ENCODE measurements at regions of chr15 and their contacts with region 1.

Region 1: GRCh38 chr15:50321680-50322210 is 33.3 kb downstream of the GABPB1 start:
- DNase-seq: no peak
- ATAC-seq: no peak
- H3K4me3 ChIP-seq: no peak overlapping the region
- H3K27ac ChIP-seq: no peak overlapping the region
- H3K4me1 ChIP-seq: no peaks in the 10 kb centered on the region
- H3K27me3 ChIP-seq: no peaks in the 10 kb centered on the region
- CTCF ChIP-seq: no peak
- EP300 ChIP-seq: no peak
- POLR2A ChIP-seq: no peak
- RAD21 ChIP-seq: no peak

Region 2: GRCh38 chr15:50051803-50052419 is 269.8 kb before region 1 on chr15:
- CTCF ChIA-PET with region 1: no interaction called
- POLR2A ChIA-PET with region 1: no interaction called
- RAD21 ChIA-PET with region 1: no interaction called
- SMC1A ChIA-PET with region 1: no interaction called
- in situ Hi-C with region 1: no loop called
- intact Hi-C with region 1: no loop called
- DNase-seq: no peak
- ATAC-seq: peak; percentile 44
- H3K4me3 ChIP-seq: no peak overlapping the region
- H3K27ac ChIP-seq: no peak overlapping the region
- H3K4me1 ChIP-seq: no peaks in the 10 kb centered on the region
- H3K27me3 ChIP-seq: no peaks in the 10 kb centered on the region
- CTCF ChIP-seq: peak; percentile 44 to 51 (median 50)
- EP300 ChIP-seq: no peak
- POLR2A ChIP-seq: no peak
- RAD21 ChIP-seq: peak; percentile 56

Region 3: DNA sequence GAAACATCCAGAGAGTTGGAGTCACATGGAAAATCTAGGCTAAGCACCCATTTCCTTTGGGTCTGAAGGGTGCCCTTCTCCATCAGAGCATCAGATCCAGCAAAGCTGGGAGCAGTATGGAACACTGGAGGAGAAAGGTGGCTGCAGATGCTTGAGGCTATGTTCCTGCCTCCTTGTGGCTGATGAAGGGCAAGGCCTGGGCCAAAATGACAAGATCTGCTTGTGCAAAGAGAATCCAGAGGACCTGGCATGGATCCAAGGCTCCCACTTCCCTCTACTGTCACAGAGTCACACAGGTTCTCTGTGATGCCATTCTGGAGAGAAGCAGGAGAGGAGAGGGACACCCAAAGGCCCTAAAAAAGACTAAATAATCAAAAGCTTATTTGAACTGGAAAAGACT is 193.5 kb before region 1 on chr15:
- CTCF ChIA-PET with region 1: no interaction called
- POLR2A ChIA-PET with region 1: no interaction called
- RAD21 ChIA-PET with region 1: no interaction called
- SMC1A ChIA-PET with region 1: no interaction called
- in situ Hi-C with region 1: no loop called
- intact Hi-C with region 1: no loop called
- DNase-seq: no peak
- ATAC-seq: no peak
- H3K4me3 ChIP-seq: no peak overlapping the region
- H3K27ac ChIP-seq: no peak overlapping the region
- H3K4me1 ChIP-seq: no peaks in the 10 kb centered on the region
- H3K27me3 ChIP-seq: peaks cover 0 to 3% of the 10 kb centered on the region in 2 experiments; a peak in 1 of 4 replicates
- CTCF ChIP-seq: no peak
- EP300 ChIP-seq: no peak
- POLR2A ChIP-seq: no peak
- RAD21 ChIP-seq: no peak

Region 4: DNA sequence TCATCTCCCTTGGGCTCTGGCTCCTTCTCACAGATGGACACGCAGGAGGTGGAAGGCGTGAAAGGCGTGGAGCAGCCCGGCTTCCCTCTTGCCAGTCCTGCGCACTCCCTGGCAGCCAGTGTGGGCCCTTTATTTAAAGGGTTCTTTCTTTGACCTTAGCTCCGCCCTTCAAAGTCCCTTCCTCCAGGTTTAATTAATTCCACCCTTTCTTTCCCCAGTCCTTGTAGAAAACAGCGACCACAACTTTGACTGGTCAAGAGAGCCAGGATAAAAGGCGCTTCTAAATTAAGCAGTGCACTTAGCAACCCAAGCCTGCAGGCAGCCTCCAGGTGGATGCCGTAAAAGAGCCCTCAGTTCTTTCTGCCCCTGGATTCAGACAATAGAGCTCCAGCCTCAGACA is 56.1 kb before region 1 on chr15 and contains the start of gene HDC:
- CTCF ChIA-PET with region 1: no interaction called
- POLR2A ChIA-PET with region 1: no interaction called
- RAD21 ChIA-PET with region 1: no interaction called
- SMC1A ChIA-PET with region 1: no interaction called
- in situ Hi-C with region 1: no loop called
- intact Hi-C with region 1: loop called (anchors 5 kb)
- DNase-seq: no peak
- ATAC-seq: no peak
- H3K4me3 ChIP-seq: no peak within 1 kb of the TSS
- H3K27ac ChIP-seq: no peak within 1 kb of the TSS
- H3K4me1 ChIP-seq: peaks cover 13% of the 10 kb centered on the region
- H3K27me3 ChIP-seq: no peaks in the 10 kb centered on the region
- CTCF ChIP-seq: no peak
- EP300 ChIP-seq: no peak
- POLR2A ChIP-seq: no peak
- RAD21 ChIP-seq: no peak
- polyA plus RNA-seq, gene HDC: not detected

Region 5: DNA sequence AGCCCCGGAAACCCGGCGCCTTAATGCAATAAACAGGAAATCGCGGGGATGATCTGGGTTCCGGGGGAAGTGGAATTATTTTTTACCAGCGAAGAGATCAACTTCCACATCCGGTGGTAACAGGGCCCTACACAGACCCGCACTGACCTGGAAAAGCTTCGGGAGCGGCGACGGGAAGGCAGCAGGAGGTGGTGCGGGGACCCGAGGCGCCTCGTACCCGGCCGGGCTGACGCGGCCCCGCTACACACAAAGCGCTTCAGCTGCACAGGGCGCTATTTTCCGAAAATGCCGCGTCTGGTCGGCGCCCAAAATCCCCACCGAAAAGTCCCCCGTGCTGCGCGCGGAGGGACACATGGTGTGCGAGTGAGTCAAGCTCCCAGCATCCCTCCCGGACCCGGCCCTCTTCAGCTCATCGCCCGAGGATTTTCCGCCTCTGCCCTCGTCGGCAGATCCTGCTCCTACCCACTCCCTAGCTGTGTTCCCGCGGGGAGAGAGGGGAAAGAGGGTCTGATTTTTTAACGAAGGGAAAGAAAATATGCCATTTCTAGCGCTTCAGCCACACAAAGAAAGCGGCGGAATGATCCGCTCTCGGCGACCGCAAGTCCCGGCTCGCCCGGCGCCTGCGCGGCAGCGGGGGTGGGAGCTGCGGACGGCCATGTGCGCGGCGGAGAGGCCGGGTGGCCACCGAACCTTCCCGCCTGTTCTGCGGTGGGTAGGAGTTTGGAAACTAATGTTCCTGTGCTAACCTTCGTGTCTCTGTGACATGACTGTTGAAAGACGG is 33.3 kb after region 1 on chr15 and contains the start of gene GABPB1:
- CTCF ChIA-PET with region 1: no interaction called
- POLR2A ChIA-PET with region 1: no interaction called
- RAD21 ChIA-PET with region 1: no interaction called
- SMC1A ChIA-PET with region 1: no interaction called
- in situ Hi-C with region 1: no loop called
- intact Hi-C with region 1: no loop called
- DNase-seq: peak; percentile 60
- ATAC-seq: peak; percentile 56
- H3K4me3 ChIP-seq: peak within 1 kb of the TSS; percentile 82
- H3K27ac ChIP-seq: peak within 1 kb of the TSS; percentile 91
- H3K4me1 ChIP-seq: peaks cover 10% of the 10 kb centered on the region
- H3K27me3 ChIP-seq: no peaks in the 10 kb centered on the region
- CTCF ChIP-seq: no peak
- EP300 ChIP-seq: no peak
- POLR2A ChIP-seq: peak; percentile 90
- RAD21 ChIP-seq: no peak
- polyA plus RNA-seq, gene GABPB1: 13.9 to 18.2 TPM